Common myeloid progenitor, CD34-positive (primary cell): ENCODE measurements at regions of chr11 and their contacts with region 1.

Region 1: DNA sequence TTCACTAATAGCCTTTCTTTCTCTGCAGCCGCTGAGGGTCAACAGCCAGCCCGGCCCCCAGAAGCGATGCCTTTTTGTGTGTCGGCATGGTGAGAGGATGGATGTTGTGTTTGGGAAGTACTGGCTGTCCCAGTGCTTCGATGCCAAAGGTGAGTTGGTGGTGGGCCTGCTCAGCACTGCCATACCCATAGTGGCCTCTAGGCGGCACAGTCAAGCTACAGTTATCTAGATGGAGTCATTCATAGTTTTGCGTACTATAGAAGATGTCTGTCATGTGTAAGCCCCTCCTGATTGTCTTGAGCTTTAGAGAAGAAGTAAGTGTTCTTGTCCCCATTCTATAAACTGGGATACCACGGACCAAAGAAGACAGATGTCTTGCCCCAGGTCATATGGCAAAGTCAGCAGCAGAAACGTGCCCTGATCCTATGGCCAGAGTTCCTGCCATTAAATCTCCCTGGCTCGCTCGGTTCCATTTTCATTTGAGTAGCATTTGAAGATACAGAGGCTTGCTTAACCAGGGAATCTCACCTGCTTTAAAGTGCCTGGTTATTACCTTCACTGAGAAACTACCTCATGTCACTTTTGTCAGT is 42.1 kb upstream of the CRTAM start:
- DNase-seq: peak; percentile 51 to 68 (median 64)
- H3K4me3 ChIP-seq: no peak overlapping the region
- H3K27ac ChIP-seq: no peak overlapping the region
- H3K4me1 ChIP-seq: no peaks in the 10 kb centered on the region
- H3K27me3 ChIP-seq: no peaks in the 10 kb centered on the region

Region 2: GRCh38 chr11:122159173-122159721 is 637.0 kb before region 1 on chr11:
- CTCF ChIA-PET with region 1: no interaction called
- POLR2A ChIA-PET with region 1: no interaction called
- DNase-seq: peak in 1 of 3 donors; percentile 10
- H3K4me3 ChIP-seq: no peak overlapping the region
- H3K27ac ChIP-seq: no peak overlapping the region
- H3K4me1 ChIP-seq: peaks cover 0 to 11% (median 4%) of the 10 kb centered on the region in 4 experiments
- H3K27me3 ChIP-seq: no peaks in the 10 kb centered on the region

Region 3: GRCh38 chr11:122344274-122344673 is 451.9 kb before region 1 on chr11:
- CTCF ChIA-PET with region 1: no interaction called
- POLR2A ChIA-PET with region 1: no interaction called
- DNase-seq: no peak
- H3K4me3 ChIP-seq: no peak overlapping the region
- H3K27ac ChIP-seq: no peak overlapping the region
- H3K4me1 ChIP-seq: peaks cover 0 to under 1% (median 0%) of the 10 kb centered on the region in 4 experiments
- H3K27me3 ChIP-seq: no peaks in the 10 kb centered on the region

Region 4: DNA sequence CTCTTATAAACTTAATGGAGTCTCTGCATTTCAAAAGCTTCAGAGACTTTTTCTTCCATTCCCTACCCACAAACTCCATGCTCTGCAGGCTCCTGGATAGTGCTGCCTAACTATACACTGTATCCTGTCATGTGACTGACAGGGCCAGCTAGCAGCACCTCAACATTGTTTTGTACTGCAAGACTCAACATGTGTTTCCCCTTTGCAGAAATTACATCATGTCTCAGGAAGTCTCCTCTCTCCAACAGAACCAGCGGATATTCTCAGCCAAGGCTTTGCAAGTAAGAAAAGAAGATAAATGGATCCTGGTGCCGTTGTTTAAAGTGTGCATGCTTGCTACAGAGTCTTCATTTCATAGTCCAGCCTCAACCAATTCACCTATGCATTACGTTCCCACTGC is 304.7 kb before region 1 on chr11:
- CTCF ChIA-PET with region 1: no interaction called
- POLR2A ChIA-PET with region 1: no interaction called
- DNase-seq: peak; percentile 26 to 86 (median 79)
- H3K4me3 ChIP-seq: peak overlapping the region in 2 of 7 experiments; percentile 3 to 15
- H3K27ac ChIP-seq: no peak overlapping the region
- H3K4me1 ChIP-seq: peaks cover 0 to 18% (median 9%) of the 10 kb centered on the region in 4 experiments
- H3K27me3 ChIP-seq: no peaks in the 10 kb centered on the region

Region 5: GRCh38 chr11:122781378-122782195 is 14.6 kb before region 1 on chr11:
- CTCF ChIA-PET with region 1: interaction called, 69 read pairs
- POLR2A ChIA-PET with region 1: interaction called, 3 read pairs
- DNase-seq: peak; percentile 71 to 78 (median 72)
- H3K4me3 ChIP-seq: no peak overlapping the region
- H3K27ac ChIP-seq: no peak overlapping the region
- H3K4me1 ChIP-seq: peaks cover 0 to 27% (median 20%) of the 10 kb centered on the region in 4 experiments
- H3K27me3 ChIP-seq: no peaks in the 10 kb centered on the region

Region 6: GRCh38 chr11:122814401-122814800 is 18.2 kb after region 1 on chr11:
- CTCF ChIA-PET with region 1: interaction called, 13 read pairs
- POLR2A ChIA-PET with region 1: no interaction called
- DNase-seq: no peak
- H3K4me3 ChIP-seq: no peak overlapping the region
- H3K27ac ChIP-seq: no peak overlapping the region
- H3K4me1 ChIP-seq: peaks cover 7 to 33% (median 19%) of the 10 kb centered on the region in 4 experiments
- H3K27me3 ChIP-seq: no peaks in the 10 kb centered on the region

Region 7: DNA sequence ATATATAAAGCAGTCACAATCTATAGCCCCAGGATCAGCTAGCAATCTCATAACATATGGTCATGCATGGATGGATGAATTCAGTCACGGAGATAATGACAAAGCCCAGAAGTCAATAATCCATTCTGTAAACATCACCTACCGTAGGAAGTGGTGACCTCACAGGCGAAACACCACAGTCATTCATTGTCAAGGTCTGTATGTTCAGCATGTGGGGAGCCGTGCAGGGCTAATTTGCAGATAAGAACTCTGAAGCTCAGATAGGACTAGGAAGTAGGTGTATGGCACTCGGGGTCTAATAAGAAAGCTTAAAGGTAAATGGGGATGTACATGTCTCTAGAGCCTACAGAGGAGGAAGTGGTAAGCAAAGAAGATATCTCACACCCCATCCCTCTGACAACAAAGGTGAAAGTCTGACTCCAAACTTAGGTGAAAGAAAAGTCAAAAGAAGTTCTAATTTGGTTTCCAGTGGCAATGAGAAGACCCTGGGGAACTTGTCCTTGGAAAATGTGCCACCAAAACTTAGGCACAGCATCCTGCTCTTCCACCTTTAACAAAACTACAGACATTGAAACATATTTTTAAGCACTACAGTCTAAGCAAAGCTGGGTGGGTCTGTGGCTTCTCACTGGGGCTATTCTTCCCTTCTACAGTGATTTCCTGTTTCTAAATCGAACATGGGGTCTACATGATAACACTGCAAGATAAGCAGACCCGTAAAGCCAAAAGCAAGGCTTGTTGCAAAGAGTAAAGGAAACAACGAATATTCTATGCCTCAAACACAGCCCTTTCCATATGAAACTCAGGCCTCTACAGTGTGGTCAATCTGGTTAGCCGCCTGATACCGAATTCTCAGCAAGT is 47.3 kb after region 1 on chr11:
- CTCF ChIA-PET with region 1: interaction called, 11 read pairs
- POLR2A ChIA-PET with region 1: no interaction called
- DNase-seq: peak in 2 of 3 donors; percentile 63 to 78
- H3K4me3 ChIP-seq: peak overlapping the region in 2 of 7 experiments; percentile 19 to 40
- H3K27ac ChIP-seq: no peak overlapping the region
- H3K4me1 ChIP-seq: peaks cover 11 to 24% (median 19%) of the 10 kb centered on the region in 4 experiments
- H3K27me3 ChIP-seq: no peaks in the 10 kb centered on the region

Region 8: GRCh38 chr11:123046473-123047259 is 250.4 kb after region 1 on chr11:
- CTCF ChIA-PET with region 1: interaction called, 11 read pairs
- POLR2A ChIA-PET with region 1: no interaction called
- DNase-seq: no peak
- H3K4me3 ChIP-seq: no peak overlapping the region
- H3K27ac ChIP-seq: no peak overlapping the region
- H3K4me1 ChIP-seq: no peaks in the 10 kb centered on the region
- H3K27me3 ChIP-seq: no peaks in the 10 kb centered on the region

Region 9: DNA sequence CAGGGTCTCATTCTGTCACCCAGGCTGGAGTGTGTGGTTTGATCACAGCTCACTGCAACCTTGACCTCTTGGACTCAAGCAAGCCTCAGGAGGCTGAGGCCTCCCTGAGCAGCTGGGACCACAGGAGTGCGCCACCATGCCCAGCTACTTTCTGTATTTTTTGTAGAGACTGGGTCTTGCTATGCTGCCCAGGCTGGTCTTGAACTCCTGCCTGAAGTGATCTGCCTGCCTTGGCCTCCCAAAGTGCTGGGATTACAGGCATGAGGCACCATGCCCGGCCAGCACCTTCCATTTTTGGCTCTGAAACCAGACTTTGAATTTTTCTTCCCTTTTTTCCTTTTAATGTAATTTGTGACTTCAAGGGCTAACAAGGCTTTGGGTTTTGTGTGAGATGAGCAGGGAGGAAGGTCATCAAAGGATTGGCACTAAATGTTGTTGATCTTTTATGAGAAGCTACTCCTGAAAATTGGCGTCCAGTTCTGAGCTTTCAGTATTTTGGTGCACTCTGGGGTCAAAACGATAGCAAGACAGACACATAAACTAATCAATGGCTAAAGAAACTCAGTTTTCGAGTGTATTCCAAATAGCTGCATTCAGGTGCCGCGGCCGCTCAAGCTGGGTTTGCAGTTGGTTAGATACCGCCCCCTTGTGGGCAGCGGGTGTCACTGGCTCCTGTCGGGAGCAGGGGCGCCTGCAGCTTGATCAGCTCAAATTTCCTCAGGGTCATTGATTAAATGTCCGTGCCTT is 450.7 kb after region 1 on chr11:
- CTCF ChIA-PET with region 1: no interaction called
- POLR2A ChIA-PET with region 1: no interaction called
- DNase-seq: peak; percentile 72 to 87 (median 83)
- H3K4me3 ChIP-seq: peak overlapping the region in 1 of 7 experiments; percentile 23
- H3K27ac ChIP-seq: no peak overlapping the region
- H3K4me1 ChIP-seq: peaks cover 0 to 3% (median 2%) of the 10 kb centered on the region in 4 experiments
- H3K27me3 ChIP-seq: no peaks in the 10 kb centered on the region